ENCODE measurements at regions of chr16 and their contacts with region 1.

Region 1: DNA sequence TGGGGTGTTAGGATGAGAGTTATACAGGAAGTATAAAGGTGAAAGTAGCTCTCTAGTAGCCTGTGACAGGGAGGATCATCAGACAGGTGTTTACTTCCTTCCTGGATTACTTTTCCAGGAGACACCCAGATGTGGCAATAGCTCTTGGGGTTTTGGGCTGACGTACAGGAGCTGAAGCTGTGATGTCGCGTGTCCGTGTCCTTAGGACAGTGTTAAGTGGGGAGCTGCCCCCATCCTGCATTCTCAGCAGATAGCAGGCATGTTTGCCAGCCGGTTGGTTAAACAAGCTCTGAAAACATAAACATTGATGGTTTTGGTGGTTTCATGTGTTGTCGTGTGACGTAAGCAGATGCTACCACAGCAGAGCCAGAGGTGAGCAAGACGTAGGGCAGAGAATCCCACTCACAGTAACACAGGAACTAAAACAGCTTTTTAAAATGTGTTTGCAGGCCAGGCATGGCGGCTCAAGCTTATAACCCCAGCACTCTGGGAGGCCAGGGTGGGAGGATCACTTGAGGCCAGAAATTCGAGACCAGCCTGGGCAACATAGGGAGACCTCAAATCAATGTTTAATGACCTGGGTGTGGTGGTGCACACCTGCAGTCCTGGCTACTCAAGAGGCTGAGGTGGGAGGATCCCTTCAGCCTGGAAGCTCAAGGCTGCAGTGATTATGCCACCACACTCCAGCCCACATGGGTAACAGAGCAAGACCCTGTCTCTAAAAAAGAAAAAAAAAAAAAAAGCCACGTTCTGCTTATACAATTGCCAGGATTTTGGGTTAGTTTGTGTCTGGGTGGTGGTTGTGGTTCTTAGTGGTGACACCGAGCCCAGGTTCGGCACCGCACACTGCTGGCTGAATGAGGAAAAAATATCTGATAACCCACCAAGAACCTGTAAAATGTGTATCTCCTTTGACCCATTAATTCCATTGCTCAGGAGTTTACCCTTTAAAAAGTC is 18.2 kb upstream of the IL17C start:
- H3K4me3 ChIP-seq: no peak overlapping the region
- H3K27ac ChIP-seq: no peak overlapping the region
- H3K4me1 ChIP-seq: no peaks in the 10 kb centered on the region
- CTCF ChIP-seq: no peak

Region 2: GRCh38 chr16:88633684-88634140 is 13.6 kb after region 1 on chr16:
- CTCF ChIA-PET with region 1: interaction called, 15 read pairs
- POLR2A ChIA-PET with region 1: no interaction called
- H3K4me3 ChIP-seq: no peak overlapping the region
- H3K27ac ChIP-seq: no peak overlapping the region
- H3K4me1 ChIP-seq: no peaks in the 10 kb centered on the region
- CTCF ChIP-seq: no peak; the same call in 1 of the 2 replicates

Measured in HEK293 (cell line).